ENCODE measurements at regions of chr12 and their contacts with region 1.

Region 1: DNA sequence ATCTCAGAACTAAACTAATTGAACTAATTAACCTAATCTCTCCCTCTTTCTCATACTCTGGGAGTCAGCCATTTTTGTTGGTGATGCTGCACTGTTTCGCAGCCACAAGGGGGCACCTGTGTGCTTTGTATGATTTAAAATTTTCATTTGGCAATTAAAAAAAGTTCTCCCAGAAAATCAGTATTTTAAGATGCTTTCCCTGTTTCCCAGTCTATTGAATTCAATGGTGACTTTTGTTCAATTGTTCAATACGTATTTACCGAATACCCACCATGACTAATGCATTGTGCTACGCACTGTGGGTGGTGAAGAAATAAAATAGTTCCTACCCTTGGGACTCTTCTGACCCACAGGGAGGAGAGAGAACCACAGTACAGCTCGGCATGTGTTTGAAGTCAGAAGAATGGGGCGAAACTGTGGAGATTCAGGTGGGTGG is 63.7 kb downstream of the ZNF664 start:
- ATAC-seq: peak; percentile 28 to 77 (median 72)
- H3K4me3 ChIP-seq: peak overlapping the region in 1 of 5 donors; percentile 8
- H3K27ac ChIP-seq: peak overlapping the region in 1 of 2 donors; percentile 35
- H3K4me1 ChIP-seq: peaks cover 12 to 16% of the 10 kb centered on the region in 2 donors

Region 2: GRCh38 chr12:124294780-124295241 is 258.1 kb after region 1 on chr12 and contains the start of gene RFLNA:
- in situ Hi-C with region 1: loop called in 2 of 9 experiments (anchors 25 kb)
- ATAC-seq: peak; percentile 86 to 91 (median 88)
- H3K4me3 ChIP-seq: peak within 1 kb of the TSS; percentile 16 to 31 (median 24)
- H3K27ac ChIP-seq: no peak within 1 kb of the TSS
- H3K4me1 ChIP-seq: peaks cover 27 to 28% of the 10 kb centered on the region in 2 donors
- total RNA-seq, gene RFLNA: 3.2 to 21.2 (median 4.9) TPM

Region 3: GRCh38 chr12:124321040-124321481 is 284.4 kb after region 1 on chr12:
- in situ Hi-C with region 1: loop called in 3 of 9 experiments (anchors 10 to 25 kb)
- ATAC-seq: peak; percentile 61 to 87 (median 74)
- H3K4me3 ChIP-seq: no peak overlapping the region
- H3K27ac ChIP-seq: no peak overlapping the region
- H3K4me1 ChIP-seq: peaks cover 13 to 15% of the 10 kb centered on the region in 2 donors